ENCODE measurements at regions of chr2 and their contacts with region 1.

Region 1: GRCh38 chr2:173441222-173441621 is 86.5 kb downstream of the CDCA7 start:
- DNase-seq: no peak
- H3K4me3 ChIP-seq: no peak overlapping the region
- H3K4me3 Mint-ChIP-seq: no peak overlapping the region
- H3K27ac Mint-ChIP-seq: no peak overlapping the region
- H3K4me1 ChIP-seq: no peaks in the 10 kb centered on the region
- H3K4me1 Mint-ChIP-seq: no peaks in the 10 kb centered on the region
- H3K27me3 ChIP-seq: no peaks in the 10 kb centered on the region
- H3K27me3 Mint-ChIP-seq: peaks cover 16% of the 10 kb centered on the region
- CTCF ChIP-seq: no peak

Region 2: DNA sequence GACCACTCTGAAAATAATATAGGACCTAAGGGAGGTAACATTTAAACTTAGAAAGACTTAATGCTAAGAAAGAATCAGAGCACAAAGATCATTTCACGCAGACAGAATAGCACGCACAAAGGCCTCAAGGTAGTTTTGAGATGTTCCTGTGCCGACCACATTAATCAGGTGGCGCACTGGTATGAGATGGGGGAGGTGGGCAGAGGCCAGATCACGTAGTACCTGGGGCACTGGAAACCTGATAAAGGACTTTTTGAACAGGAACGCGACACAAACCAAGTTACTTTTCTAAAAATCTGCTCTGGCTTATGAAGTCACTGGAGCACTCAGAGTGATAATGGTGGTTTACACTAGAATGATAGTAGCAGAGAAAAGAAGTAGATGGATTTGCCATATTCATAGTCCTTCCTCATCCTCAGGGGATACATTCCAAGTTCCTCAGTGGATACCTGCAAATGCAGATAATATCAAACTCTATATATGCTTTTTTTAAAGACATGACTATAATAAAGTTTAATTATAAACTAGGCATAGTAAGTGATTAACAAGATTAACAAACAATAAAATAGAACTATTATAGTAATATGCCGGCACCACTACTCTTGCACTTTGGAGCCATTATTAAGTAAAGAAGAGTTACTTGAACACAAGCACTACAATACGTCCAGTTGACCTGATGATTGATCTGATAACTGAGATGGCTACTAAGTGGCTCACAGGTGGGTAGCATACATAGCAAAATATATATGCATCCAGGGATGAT is 129.2 kb before region 1 on chr2:
- CTCF ChIA-PET with region 1: no interaction called
- POLR2A ChIA-PET with region 1: no interaction called
- intact Hi-C with region 1: loop called (anchors 5 kb)
- DNase-seq: no peak
- H3K4me3 ChIP-seq: no peak overlapping the region
- H3K4me3 Mint-ChIP-seq: no peak overlapping the region
- H3K27ac Mint-ChIP-seq: no peak overlapping the region
- H3K4me1 ChIP-seq: no peaks in the 10 kb centered on the region
- H3K4me1 Mint-ChIP-seq: peaks cover 4% of the 10 kb centered on the region
- H3K27me3 ChIP-seq: no peaks in the 10 kb centered on the region
- H3K27me3 Mint-ChIP-seq: no peaks in the 10 kb centered on the region
- CTCF ChIP-seq: no peak